Activated T-helper 2 cell treated with anti-CD3 and anti-CD28 coated beads, Interferon-gamma antibody, Interleukin-2, Interleukin-4, amounts not matched to agents 10 μg/mL and 5 μg/mL and 100 μg/mL, durations not matched to agents 14 hours and 24 hours and 36 hours (primary cell): ENCODE measurements at regions of chr12 and their contacts with region 1.

Region 1: DNA sequence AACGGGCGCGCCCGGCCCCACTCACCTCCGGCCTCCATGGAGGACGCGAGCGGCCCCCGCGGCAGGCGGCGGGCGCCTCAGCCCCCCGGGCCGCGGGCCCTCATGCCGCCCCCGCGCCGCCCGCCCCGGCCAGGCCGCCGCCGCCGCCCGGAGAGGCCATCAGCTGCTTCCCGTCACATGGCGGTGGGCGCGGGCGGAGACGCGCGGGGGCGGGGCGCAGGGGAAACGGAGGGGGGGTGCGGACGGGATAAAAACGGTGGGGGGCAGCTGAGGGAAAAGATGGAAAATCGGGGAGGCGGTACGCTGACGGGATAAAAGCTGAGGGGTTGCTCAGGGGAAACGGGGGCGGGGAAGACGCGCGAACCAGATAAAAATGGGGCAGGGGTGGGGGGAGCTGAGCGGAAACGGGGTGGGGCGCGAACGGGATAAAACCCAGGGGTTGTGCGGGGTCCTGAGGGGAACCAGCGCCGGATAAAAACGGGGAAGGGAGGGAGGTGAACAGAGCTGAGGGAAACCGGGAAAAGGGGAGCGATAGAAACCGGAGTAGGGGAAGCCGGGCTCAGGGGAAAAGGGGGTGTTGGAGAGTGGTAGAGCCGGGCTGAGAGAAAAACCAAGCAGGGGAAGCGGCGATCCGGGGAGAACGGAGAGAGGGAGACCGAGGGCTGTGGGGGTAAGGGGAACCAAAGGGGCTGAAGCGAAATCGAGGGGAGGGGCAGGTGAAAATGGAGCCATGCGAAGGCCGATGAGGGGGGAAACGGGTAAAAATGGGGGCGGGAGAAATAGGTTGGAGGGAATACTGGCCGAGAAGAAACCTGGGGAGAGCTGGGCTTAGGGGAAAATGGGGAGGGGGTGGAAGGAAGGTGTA is at the start of gene WSB2:
- DNase-seq: peak; percentile 32
- H3K4me3 Mint-ChIP-seq: peak within 1 kb of the TSS; percentile 99
- H3K27ac Mint-ChIP-seq: peak within 1 kb of the TSS; percentile 99
- H3K4me1 Mint-ChIP-seq: peaks cover 50% of the 10 kb centered on the region
- H3K27me3 Mint-ChIP-seq: no peaks in the 10 kb centered on the region
- total RNA-seq, gene WSB2: 84.2 and 89.3 TPM in 2 replicates

Region 2: GRCh38 chr12:117919479-117919878 is 141.8 kb before region 1 on chr12:
- intact Hi-C with region 1: no loop called
- DNase-seq: no peak
- H3K4me3 Mint-ChIP-seq: no peak overlapping the region
- H3K27ac Mint-ChIP-seq: no peak overlapping the region
- H3K4me1 Mint-ChIP-seq: no peaks in the 10 kb centered on the region
- H3K27me3 Mint-ChIP-seq: peaks cover 3% of the 10 kb centered on the region

Region 3: GRCh38 chr12:117968826-117969659 is 92.2 kb before region 1 on chr12 and contains the start of gene KSR2:
- intact Hi-C with region 1: loop called (anchors 5 kb)
- DNase-seq: peak; percentile 56
- H3K4me3 Mint-ChIP-seq: peak within 1 kb of the TSS; percentile 84
- H3K27ac Mint-ChIP-seq: no peak within 1 kb of the TSS
- H3K4me1 Mint-ChIP-seq: peaks cover 4% of the 10 kb centered on the region
- H3K27me3 Mint-ChIP-seq: peaks cover 41% of the 10 kb centered on the region
- total RNA-seq, gene KSR2: 0.05 and 0.09 TPM in 2 replicates

Region 4: DNA sequence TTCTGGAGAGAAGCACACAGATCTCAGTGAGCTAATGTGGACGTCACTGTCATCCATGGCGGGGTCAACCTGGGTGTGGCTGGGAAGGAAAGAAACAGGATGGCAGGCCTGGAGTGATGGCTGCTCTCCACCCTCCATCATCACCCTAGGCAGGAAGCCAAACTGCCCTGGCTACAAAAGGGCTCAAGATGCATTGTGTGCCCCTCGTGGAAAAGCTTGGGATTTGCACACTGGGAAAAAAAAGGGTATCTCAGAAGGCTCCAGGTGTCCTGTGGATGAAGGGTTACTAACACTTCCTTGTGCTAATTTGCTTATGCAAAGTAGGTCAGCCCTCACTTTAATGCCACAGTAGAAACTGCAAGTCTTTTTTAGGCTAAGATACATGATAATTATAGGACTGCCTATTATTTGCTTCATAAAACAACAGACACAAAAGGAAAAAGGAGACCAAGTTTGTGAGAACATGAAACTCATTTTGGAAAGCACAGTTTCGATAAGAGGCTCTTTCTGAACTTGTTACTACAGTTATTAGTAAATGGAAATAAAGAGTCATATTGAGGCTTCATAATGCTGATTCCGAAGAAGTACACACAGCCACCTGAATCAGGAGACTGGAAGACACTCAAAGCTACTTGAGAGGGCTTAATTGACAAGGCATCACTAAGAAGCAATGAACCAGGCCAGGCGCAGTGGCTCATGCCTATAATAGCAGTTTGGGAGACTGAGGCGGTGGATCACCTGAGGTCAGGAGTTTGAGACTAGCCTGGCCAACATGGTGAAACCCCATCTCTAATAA is 25.8 kb before region 1 on chr12:
- intact Hi-C with region 1: loop called (anchors 1 kb)
- DNase-seq: no peak
- H3K4me3 Mint-ChIP-seq: peak overlapping the region; percentile 28
- H3K27ac Mint-ChIP-seq: peak overlapping the region; percentile 97
- H3K4me1 Mint-ChIP-seq: peaks cover 36% of the 10 kb centered on the region
- H3K27me3 Mint-ChIP-seq: no peaks in the 10 kb centered on the region

Region 5: DNA sequence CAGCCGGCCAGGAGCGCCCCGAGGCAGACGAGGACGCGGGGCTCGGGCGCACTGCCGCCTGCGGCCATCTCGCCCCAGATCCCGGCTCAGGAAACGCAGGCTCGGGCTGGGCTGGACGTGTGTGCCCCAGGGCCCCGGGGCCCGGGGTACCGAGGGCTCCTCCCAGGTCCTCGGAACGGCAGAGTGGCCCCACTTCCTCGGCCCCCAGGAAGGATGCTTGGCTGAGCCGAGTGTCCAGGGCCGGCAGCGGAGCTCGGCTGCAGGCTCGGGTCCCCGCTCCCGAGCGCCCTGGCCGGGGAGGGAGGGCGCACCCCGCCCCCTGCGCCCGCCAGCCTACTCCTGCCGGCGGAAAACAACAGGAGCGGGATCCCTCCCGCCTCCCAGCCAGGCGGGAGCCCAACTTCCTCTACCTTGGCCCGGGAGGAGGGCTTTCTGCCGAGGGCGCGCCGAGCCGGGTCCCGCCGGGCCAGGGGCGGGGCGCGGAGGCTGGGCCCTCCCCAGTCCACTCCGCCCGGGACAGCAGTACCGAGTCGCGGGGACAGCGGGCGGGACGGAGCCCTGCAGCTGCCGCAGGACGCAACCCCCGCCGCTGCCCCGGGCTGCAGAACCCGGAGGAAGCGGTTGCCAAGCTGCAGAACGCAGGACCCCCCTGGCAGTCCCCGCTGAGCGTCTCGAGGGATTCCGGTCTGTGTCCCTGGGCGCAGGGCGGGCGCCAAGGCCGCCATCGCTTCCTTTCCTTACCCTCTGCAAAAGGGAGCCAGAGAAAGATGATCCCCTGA is 42.5 kb after region 1 on chr12 and contains the start of gene VSIG10:
- intact Hi-C with region 1: loop called (anchors 5 kb)
- DNase-seq: peak; percentile 10
- H3K4me3 Mint-ChIP-seq: peak within 1 kb of the TSS; percentile 91
- H3K27ac Mint-ChIP-seq: peak within 1 kb of the TSS; percentile 63
- H3K4me1 Mint-ChIP-seq: peaks cover 6% of the 10 kb centered on the region
- H3K27me3 Mint-ChIP-seq: peaks cover 21% of the 10 kb centered on the region
- total RNA-seq, gene VSIG10: 9.6 and 11.1 TPM in 2 replicates

Region 6: DNA sequence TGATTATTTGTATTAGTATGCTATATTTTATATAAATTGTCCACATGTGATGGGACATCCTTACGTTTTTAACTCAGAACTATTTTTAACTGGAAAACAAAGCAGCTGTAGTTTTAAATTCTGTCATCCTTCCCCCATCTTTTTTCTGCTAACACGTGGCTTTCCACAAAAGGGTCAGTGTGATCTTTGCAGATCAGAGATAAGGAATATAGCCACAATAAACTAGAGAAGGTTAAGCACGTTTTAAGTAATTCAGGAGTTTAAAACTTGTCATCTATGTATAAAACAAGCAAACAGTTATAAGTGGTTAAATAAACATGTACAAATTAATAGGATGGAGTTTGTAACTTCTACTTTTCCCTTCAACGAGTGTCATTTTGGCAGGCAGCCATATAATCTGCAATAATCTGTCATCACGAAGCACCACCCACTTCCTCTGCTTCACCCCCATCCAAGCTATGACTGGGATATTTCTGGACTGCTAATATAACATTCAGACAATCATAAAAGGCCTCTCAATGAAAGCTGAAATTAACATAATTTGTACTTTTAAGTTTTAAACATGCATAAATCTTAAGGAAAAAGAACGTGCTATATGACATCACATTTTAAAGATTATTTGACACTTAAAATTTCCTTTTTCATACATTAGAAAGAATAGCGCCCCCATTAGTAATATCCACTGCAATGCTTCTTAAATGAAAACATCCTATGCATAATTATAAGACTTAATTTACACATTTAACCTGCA is 296.2 kb after region 1 on chr12:
- intact Hi-C with region 1: loop called (anchors 5 kb)
- DNase-seq: peak; percentile 33
- H3K4me3 Mint-ChIP-seq: peak overlapping the region; percentile 92
- H3K27ac Mint-ChIP-seq: peak overlapping the region; percentile 92
- H3K4me1 Mint-ChIP-seq: peaks cover 44% of the 10 kb centered on the region
- H3K27me3 Mint-ChIP-seq: no peaks in the 10 kb centered on the region

Region 7: DNA sequence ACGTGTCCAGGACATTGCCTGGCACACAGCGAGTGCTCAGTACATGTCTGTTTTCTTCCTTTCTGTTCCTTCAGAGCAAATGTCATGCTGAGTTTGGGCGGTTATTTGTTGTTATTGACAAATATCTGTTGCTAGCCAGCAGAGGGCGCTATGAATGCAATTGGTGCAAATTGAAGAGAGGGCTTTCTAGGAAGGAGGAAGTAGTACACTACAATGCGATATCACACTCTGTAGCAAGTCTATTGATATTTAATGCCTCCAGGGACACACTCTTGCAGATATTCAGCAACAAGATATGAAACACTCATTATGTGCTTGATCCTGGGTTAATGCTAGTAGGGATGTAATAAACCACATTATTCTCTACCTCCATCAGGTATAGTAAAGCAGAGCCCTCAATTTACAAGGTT is 652.8 kb after region 1 on chr12:
- intact Hi-C with region 1: no loop called
- DNase-seq: peak; percentile 8
- H3K4me3 Mint-ChIP-seq: no peak overlapping the region
- H3K27ac Mint-ChIP-seq: no peak overlapping the region
- H3K4me1 Mint-ChIP-seq: no peaks in the 10 kb centered on the region
- H3K27me3 Mint-ChIP-seq: no peaks in the 10 kb centered on the region